GM10248 (cell line): ENCODE measurements at regions of chr14 and their contacts with region 1.

Region 1: GRCh38 chr14:93970549-93970946 is 5.8 kb downstream of the ASB2 start:
- DNase-seq: no peak
- CTCF ChIP-seq: peak; percentile 69

Region 2: GRCh38 chr14:93953263-93953662 is 17.3 kb before region 1 on chr14:
- CTCF ChIA-PET with region 1: interaction called, 53 read pairs
- POLR2A ChIA-PET with region 1: interaction called, 18 read pairs
- DNase-seq: no peak
- CTCF ChIP-seq: peak; percentile 37

Region 3: DNA sequence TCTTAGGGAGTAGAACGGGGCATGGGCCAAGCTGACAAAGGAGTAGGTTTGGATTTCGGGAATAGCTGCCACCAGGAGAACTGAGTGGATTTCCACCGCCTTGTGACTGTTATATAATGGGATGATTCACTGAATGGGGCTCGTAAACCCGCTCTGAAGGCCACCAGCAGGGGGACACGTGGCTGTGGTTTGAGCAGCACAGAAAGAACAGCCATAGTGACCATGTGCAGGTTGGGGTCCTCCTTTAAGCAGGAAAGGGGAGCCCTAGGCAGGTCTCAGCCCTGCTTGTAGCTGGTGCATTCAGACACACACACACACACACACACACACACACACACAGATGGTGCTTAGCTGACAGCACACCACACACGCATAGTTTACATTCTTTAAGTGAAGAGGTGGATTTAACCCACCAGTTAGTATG is 14.5 kb after region 1 on chr14:
- CTCF ChIA-PET with region 1: interaction called, 55 read pairs
- POLR2A ChIA-PET with region 1: interaction called, 3 read pairs
- DNase-seq: no peak
- CTCF ChIP-seq: peak; percentile 29

Region 4: DNA sequence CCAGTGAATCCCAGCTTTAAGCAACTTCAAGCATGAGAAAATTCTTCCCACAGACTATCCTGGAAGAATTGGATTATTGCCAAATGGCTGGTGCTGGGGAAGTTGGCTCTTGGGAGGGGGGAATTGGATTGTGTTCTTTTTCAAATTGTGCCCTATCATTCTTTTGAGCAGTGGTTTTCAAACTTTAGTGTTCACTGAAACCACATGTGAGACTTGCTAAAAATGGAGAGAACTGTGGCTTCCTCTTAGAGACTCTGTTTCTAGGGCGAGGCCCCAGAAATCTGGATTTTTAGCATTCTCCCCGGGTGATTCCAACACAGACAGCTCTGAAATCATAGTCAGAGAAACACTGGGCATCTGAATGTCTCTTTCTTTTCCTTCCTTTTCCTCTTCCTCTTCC is 41.2 kb after region 1 on chr14:
- CTCF ChIA-PET with region 1: no interaction called
- POLR2A ChIA-PET with region 1: no interaction called
- DNase-seq: no peak
- CTCF ChIP-seq: no peak

Region 5: GRCh38 chr14:94267347-94267746 is 296.8 kb after region 1 on chr14:
- CTCF ChIA-PET with region 1: no interaction called
- POLR2A ChIA-PET with region 1: no interaction called
- DNase-seq: no peak
- CTCF ChIP-seq: no peak